Activated naive CD4-positive, alpha-beta T cell treated with anti-CD3 and anti-CD28 coated beads for 36 hours (primary cell): ENCODE measurements at regions of chr5 and their contacts with region 1.

Region 1: DNA sequence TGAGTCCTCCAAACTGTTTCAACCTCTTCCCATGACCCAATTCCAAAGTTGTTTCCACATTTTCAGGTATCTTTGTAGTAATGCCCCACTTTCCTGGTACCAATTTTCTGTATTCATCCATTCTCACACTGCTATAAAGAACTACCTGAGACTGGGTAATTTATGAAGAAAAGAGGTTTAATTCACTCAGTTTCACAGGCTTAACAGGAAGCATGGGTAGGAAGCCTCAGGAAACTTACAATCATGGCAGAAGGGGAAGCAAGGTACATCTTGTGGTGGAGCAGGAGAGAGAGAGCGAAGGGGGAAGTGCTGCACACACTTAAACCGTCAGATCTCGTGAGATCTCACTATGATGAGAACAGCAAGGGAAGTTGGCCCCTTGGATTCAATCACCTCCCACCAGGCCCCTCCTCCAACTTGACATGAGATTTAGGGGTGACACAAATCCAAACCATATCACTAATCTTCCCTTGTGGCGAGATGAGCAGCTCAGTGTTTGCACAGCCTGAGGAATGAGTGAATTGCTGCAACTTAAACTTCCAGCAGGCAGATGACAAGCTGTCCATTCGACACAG is 42.9 kb downstream of the TRIP13 start:
- DNase-seq: no peak
- H3K4me3 Mint-ChIP-seq: no peak overlapping the region
- H3K27ac Mint-ChIP-seq: no peak overlapping the region
- H3K4me1 Mint-ChIP-seq: peaks cover 12% of the 10 kb centered on the region
- H3K27me3 Mint-ChIP-seq: no peaks in the 10 kb centered on the region

Region 2: GRCh38 chr5:963673-964531 is 28.3 kb after region 1 on chr5:
- CTCF ChIA-PET with region 1: no interaction called
- intact Hi-C with region 1: loop called (anchors 2 kb)
- DNase-seq: peak; percentile 84
- H3K4me3 Mint-ChIP-seq: peak overlapping the region; percentile 42
- H3K27ac Mint-ChIP-seq: peak overlapping the region; percentile 69
- H3K4me1 Mint-ChIP-seq: peaks cover 20% of the 10 kb centered on the region
- H3K27me3 Mint-ChIP-seq: peaks cover 36% of the 10 kb centered on the region

Region 3: GRCh38 chr5:1011226-1011631 is 75.6 kb after region 1 on chr5:
- CTCF ChIA-PET with region 1: interaction called, 7 read pairs
- intact Hi-C with region 1: loop called (anchors 2 kb)
- DNase-seq: peak; percentile 71
- H3K4me3 Mint-ChIP-seq: no peak overlapping the region
- H3K27ac Mint-ChIP-seq: no peak overlapping the region
- H3K4me1 Mint-ChIP-seq: peaks cover 13% of the 10 kb centered on the region
- H3K27me3 Mint-ChIP-seq: peaks cover 43% of the 10 kb centered on the region

Region 4: DNA sequence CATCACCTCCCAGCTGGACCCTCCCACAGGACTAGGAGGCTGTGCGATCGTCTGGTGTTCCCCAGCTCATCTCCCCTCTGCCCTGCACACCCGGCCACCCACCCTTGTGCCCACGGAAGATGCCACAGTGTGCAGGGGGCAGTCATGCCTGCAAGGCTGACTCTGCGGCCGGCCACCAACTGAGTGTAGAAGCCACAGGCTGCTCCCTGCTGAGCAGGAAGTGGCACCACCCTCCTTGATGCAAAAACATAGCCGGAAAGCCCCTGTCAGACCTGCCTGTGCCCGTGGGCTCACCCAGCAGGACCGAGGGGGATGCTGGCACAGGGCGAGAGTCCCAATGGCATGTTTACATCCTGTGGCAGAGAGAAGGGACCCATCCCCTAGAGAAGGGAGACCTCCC is 216.6 kb after region 1 on chr5:
- CTCF ChIA-PET with region 1: no interaction called
- intact Hi-C with region 1: no loop called
- DNase-seq: no peak
- H3K4me3 Mint-ChIP-seq: no peak overlapping the region
- H3K27ac Mint-ChIP-seq: no peak overlapping the region
- H3K4me1 Mint-ChIP-seq: no peaks in the 10 kb centered on the region
- H3K27me3 Mint-ChIP-seq: peaks cover 23% of the 10 kb centered on the region